BJ (cell line): ENCODE measurements at regions of chr10 and their contacts with region 1.

Region 1: DNA sequence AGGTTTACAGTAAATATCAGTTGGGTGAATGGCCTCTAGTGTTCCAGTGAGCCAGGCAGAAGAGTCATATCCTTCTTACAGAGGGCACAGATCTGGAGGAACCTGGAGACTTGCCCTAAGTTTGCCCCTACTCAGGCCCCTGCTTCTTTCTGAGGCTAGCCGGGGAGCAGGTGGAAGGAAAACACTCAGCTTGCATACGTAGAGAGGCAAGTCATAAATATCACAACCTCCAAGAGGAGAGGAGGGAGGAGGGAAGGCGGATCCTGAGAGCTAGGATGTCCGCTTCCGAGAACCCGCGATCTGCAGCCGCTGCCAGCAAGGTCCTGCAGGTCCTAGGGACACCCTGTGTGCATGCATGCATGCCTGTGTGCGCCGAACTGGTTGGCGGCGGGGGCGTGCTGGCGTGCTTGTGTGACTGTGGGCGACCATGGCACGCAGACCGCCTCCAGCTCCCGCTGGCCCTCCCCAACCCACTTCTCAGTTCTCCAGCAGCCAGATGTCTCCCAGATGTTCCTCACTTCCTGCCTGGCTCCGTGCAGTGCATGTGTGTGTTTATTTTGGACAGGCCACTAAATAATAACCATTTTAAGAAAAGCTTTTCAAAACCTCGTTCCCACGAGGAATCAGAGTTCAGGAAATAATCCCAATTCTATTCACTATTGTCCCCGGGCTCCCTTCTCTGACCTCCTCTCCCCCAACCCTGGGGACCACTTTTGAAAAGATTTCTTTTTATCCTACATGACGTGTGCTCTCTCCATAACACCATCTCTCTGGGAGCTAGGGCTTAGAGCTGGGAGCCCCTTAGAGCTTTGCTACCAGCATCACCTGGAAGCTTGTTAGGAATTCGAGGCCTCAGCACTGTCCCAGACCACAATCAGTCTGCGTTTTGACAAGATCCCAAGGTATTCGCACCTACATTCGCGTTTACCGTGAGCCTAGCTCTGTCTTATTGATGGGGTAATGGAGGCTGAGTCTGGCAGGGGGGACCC is 32.4 kb downstream of the UNC5B start:
- DNase-seq: peak; percentile 94
- H3K4me3 ChIP-seq: no peak overlapping the region
- H3K27me3 ChIP-seq: no peaks in the 10 kb centered on the region
- CTCF ChIP-seq: no peak

Region 2: DNA sequence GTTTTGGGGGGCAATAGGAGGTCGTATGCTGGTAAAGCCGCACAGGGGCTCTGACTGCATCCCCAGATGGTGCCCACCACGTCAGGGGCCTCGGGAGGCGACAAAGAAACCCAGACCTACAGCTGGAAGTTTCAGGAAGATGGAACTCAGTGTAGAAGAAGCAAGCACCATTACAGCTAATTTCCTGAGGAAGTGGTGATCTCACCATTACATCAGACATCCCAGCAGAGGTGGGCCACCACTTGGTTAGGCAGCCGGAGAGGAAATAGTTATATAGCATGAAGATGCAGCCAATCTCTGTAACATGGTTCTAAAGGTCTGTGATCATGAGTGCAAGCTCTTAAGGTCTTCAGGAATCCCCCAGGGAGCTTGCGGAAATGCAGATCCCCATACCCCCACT is 229.1 kb before region 1 on chr10:
- CTCF ChIA-PET with region 1: no interaction called
- POLR2A ChIA-PET with region 1: no interaction called
- DNase-seq: no peak
- H3K4me3 ChIP-seq: no peak overlapping the region
- H3K27me3 ChIP-seq: peaks cover 3% of the 10 kb centered on the region
- CTCF ChIP-seq: no peak

Region 3: DNA sequence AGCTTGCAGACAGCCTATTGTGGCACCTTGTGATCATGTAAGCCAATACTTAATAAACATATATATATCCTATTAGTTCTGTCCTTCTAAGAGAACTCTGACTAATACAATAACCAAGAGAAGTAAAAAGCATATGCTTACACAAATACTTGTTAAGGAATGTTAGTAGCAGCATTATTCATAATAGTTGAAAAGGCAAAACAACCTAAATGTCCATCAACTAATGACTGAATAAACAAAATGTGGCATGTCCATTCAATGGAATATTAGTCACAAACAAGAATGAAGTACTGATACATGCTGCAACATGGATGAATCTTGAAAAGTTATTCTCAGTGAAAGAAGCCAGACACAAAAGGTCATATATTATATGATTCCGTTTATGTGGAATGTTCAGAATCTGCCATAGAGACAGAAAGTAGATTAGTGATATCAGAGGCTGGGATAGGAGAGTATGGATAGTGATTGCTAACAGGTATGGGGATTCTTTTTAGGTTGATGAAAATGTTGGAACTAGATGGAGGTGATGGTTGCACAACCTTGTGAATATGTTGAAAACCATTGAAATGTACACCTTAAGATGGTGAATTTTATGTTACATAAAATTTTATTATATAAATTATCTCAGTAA is 144.9 kb before region 1 on chr10:
- CTCF ChIA-PET with region 1: no interaction called
- POLR2A ChIA-PET with region 1: no interaction called
- DNase-seq: no peak
- H3K4me3 ChIP-seq: no peak overlapping the region
- H3K27me3 ChIP-seq: 0 out of 2 replicates have a peak, but pooled peaks cover 4% of the 10 kb centered on the region
- CTCF ChIP-seq: no peak

Region 4: DNA sequence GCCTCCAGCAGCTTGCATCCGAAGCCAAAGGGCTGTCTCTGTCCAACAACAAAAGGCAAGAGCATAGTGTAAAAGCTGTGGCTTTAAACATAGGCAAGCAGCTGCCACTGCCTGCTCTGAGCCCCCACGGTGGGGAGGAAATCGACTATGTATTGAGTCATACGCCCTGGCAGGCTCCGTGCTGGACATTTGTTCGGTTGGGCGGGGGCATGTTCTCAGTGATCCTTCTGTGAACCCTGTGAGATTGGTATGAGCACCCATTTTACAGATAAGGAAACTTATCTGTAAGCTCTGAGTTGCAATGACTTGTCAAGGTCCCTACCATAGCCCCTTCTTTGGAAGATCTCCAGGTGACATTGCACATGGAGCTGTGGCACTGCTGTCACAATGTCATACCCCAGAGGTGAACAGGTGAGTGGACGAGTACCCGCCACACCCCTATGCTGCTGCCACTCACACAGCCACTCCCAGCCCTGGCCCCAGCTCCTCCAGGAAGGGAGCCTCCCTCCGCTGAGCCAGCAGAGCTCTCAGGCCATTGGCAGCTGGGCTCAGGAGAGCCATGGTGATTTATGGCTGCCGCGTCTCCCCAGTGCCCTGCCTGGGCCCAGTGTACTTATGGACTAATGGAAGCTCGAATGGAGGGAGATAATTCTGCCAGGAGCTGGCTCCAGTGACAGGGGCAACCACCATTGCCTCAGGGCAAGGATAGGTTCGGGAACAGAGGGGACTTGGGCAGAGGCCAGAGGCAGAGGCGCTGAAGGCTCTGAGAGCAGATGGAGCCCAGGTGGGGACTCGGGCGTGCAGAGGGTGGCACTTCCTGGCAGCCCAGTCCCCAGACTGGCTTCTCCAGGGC is 11.3 kb after region 1 on chr10:
- CTCF ChIA-PET with region 1: interaction called, 14 read pairs
- POLR2A ChIA-PET with region 1: no interaction called
- DNase-seq: peak; percentile 55
- H3K4me3 ChIP-seq: no peak overlapping the region
- H3K27me3 ChIP-seq: no peaks in the 10 kb centered on the region
- CTCF ChIP-seq: no peak

Region 5: GRCh38 chr10:71270301-71271220 is 25.8 kb after region 1 on chr10:
- CTCF ChIA-PET with region 1: interaction called, 48 read pairs
- POLR2A ChIA-PET with region 1: no interaction called
- DNase-seq: no peak
- H3K4me3 ChIP-seq: no peak overlapping the region
- H3K27me3 ChIP-seq: no peaks in the 10 kb centered on the region
- CTCF ChIP-seq: peak; percentile 81

Region 6: GRCh38 chr10:71383972-71384687 is 139.4 kb after region 1 on chr10:
- CTCF ChIA-PET with region 1: no interaction called
- POLR2A ChIA-PET with region 1: no interaction called
- DNase-seq: no peak
- H3K4me3 ChIP-seq: no peak overlapping the region
- H3K27me3 ChIP-seq: peaks cover 12% of the 10 kb centered on the region
- CTCF ChIP-seq: peak; percentile 97